Mammary epithelial cell (primary cell): ENCODE measurements at regions of chr2 and their contacts with region 1.

Region 1: GRCh38 chr2:143246815-143247744 is 117.9 kb downstream of the ARHGAP15 start:
- DNase-seq: no peak
- H3K4me3 ChIP-seq: no peak overlapping the region
- H3K27ac ChIP-seq: no peak overlapping the region
- H3K4me1 ChIP-seq: no peaks in the 10 kb centered on the region
- H3K27me3 ChIP-seq: peaks cover 6% of the 10 kb centered on the region
- CTCF ChIP-seq: no peak

Region 2: GRCh38 chr2:143171532-143172216 is 75.4 kb before region 1 on chr2:
- CTCF ChIA-PET with region 1: no interaction called
- dilution Hi-C with region 1: no loop called
- in situ Hi-C with region 1: no loop called
- intact Hi-C with region 1: no loop called
- DNase-seq: no peak
- H3K4me3 ChIP-seq: no peak overlapping the region
- H3K27ac ChIP-seq: no peak overlapping the region
- H3K4me1 ChIP-seq: no peaks in the 10 kb centered on the region
- H3K27me3 ChIP-seq: no peaks in the 10 kb centered on the region
- CTCF ChIP-seq: peak in 1 of 2 donors; percentile 48

Region 3: GRCh38 chr2:143183804-143184463 is 63.1 kb before region 1 on chr2:
- CTCF ChIA-PET with region 1: no interaction called
- dilution Hi-C with region 1: loop called (anchors 10 kb)
- in situ Hi-C with region 1: no loop called
- intact Hi-C with region 1: no loop called
- DNase-seq: no peak
- H3K4me3 ChIP-seq: no peak overlapping the region
- H3K27ac ChIP-seq: no peak overlapping the region
- H3K4me1 ChIP-seq: no peaks in the 10 kb centered on the region
- H3K27me3 ChIP-seq: peaks cover 2% of the 10 kb centered on the region
- CTCF ChIP-seq: no peak

Region 4: GRCh38 chr2:143289025-143289424 is 41.9 kb after region 1 on chr2:
- CTCF ChIA-PET with region 1: no interaction called
- dilution Hi-C with region 1: loop called (anchors 5 kb)
- in situ Hi-C with region 1: no loop called
- intact Hi-C with region 1: no loop called
- DNase-seq: no peak
- H3K4me3 ChIP-seq: no peak overlapping the region
- H3K27ac ChIP-seq: no peak overlapping the region
- H3K4me1 ChIP-seq: no peaks in the 10 kb centered on the region
- H3K27me3 ChIP-seq: peaks cover 6% of the 10 kb centered on the region
- CTCF ChIP-seq: no peak

Region 5: GRCh38 chr2:143300536-143300935 is 53.5 kb after region 1 on chr2:
- CTCF ChIA-PET with region 1: no interaction called
- dilution Hi-C with region 1: no loop called
- in situ Hi-C with region 1: no loop called
- intact Hi-C with region 1: no loop called
- DNase-seq: no peak
- H3K4me3 ChIP-seq: no peak overlapping the region
- H3K27ac ChIP-seq: no peak overlapping the region
- H3K4me1 ChIP-seq: no peaks in the 10 kb centered on the region
- H3K27me3 ChIP-seq: no peaks in the 10 kb centered on the region
- CTCF ChIP-seq: no peak